Sigmoid colon (tissue), 7 donors: ENCODE measurements at regions of chr13 and their contacts with region 1.

Region 1: GRCh38 chr13:52128714-52129700 is at the start of gene NEK5:
- DNase-seq: peak; percentile 70
- H3K4me3 ChIP-seq: peak within 1 kb of the TSS; percentile 50 to 74 (median 64)
- H3K27ac ChIP-seq: peak within 1 kb of the TSS; percentile 10 to 65 (median 58)
- H3K4me1 ChIP-seq: peaks cover 0 to 22% (median 20%) of the 10 kb centered on the region in 4 donors
- H3K27me3 ChIP-seq: no peaks in the 10 kb centered on the region
- CTCF ChIP-seq: peak in 3 of 4 experiments; percentile 64 to 77 (median 71)
- EP300 ChIP-seq: no peak
- POLR2A ChIP-seq: no peak
- total RNA-seq, gene NEK5: 0.27 to 0.83 (median 0.33) TPM in 3 of 4 donors, not detected in the other

Region 2: DNA sequence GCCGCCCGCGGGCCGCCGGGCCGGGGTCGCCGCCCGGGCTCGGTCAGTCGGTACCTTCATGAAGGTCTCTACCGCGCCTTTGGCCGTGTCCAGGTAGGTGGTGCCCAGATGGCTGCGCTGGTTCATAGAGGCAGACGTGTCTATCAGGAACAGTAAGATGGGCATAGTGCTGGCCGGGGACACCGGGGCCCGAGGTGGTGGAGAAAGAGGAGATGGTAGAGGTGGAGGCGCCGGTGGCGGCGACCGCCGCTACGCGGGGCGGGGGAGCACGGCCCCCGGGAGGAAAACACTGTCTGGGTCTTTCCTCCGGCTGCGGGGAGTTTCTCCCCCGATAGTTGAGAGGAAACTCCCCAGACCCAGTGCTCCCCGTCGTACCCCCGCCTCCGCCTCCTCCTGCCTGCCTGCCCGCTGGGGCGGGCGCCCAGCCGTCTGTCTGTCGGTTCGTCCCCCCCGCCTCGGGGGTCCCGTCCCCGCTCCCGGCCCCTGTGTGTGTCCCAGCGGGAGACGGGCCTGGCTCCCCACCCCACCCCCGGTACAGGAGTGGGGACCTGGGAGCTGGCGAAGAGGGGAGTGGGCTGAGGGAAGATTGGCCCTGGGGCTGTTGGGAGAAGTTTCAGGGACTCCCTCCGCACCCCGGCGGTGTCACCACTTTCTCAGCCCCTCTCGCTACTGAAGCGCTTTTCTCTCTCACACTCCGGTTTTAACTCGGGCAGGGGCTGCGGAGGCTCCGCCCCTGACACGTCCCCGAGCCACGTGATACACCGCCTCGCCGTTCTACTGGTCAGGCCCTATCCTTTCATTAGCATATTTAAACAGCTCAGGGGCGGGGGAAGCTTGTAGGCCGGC is 676.4 kb before region 1 on chr13 and contains the start of gene INTS6:
- intact Hi-C with region 1: loop called (anchors 10 kb)
- DNase-seq: peak; percentile 100
- H3K4me3 ChIP-seq: peak within 1 kb of the TSS; percentile 87 to 97 (median 92)
- H3K27ac ChIP-seq: peak within 1 kb of the TSS; percentile 99 to 100 (median 100)
- H3K4me1 ChIP-seq: peaks cover 0 to 38% (median 28%) of the 10 kb centered on the region in 4 donors
- H3K27me3 ChIP-seq: no peaks in the 10 kb centered on the region
- CTCF ChIP-seq: no peak
- EP300 ChIP-seq: no peak
- POLR2A ChIP-seq: peak; percentile 99 to 100
- total RNA-seq, gene INTS6: 30.0 to 43.3 (median 35.1) TPM

Region 3: DNA sequence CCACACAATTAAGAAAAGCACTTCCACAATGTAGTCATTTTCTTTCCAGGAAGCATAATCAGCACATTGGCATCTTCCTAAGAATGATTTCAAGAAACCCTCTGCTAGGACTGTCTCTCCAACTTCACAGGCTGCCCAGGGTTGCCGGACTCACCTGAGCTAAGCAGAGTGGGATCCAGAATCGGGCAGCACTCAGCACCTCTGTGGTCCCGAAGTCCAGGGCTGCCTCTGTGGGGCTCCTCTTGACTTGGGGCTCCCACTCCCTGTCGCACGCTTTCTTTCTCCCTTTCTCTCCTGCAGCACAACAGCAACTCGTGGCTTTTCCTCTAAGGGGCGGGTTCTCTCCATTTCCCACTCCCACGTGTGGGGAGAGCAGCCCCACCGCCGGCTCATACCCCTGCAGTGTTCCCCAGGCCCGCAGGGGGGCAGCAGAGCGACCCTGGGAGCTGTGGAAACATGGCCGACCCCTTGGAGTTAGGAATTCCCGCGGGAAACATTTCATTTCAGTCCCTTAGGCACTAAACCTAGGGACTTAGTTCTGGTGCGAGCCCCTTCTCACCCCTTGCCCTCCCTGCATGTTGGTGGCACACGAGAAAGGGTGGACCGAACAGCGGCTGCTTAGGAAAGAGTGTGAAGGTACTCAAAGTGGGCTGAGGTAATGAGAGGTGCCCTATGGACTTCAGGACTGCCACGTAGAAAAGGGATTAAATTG is 284.0 kb before region 1 on chr13 and contains the start of gene TMEM272:
- intact Hi-C with region 1: loop called (anchors 2 kb)
- DNase-seq: no peak
- H3K4me3 ChIP-seq: no peak within 1 kb of the TSS
- H3K27ac ChIP-seq: no peak within 1 kb of the TSS
- H3K4me1 ChIP-seq: peaks cover 0 to 8% (median 2%) of the 10 kb centered on the region in 4 donors
- H3K27me3 ChIP-seq: no peaks in the 10 kb centered on the region
- CTCF ChIP-seq: peak; percentile 23 to 86 (median 59)
- EP300 ChIP-seq: no peak
- POLR2A ChIP-seq: no peak
- total RNA-seq, gene TMEM272: under 0.01 TPM in 1 of 4 donors, not detected in the others

Region 4: DNA sequence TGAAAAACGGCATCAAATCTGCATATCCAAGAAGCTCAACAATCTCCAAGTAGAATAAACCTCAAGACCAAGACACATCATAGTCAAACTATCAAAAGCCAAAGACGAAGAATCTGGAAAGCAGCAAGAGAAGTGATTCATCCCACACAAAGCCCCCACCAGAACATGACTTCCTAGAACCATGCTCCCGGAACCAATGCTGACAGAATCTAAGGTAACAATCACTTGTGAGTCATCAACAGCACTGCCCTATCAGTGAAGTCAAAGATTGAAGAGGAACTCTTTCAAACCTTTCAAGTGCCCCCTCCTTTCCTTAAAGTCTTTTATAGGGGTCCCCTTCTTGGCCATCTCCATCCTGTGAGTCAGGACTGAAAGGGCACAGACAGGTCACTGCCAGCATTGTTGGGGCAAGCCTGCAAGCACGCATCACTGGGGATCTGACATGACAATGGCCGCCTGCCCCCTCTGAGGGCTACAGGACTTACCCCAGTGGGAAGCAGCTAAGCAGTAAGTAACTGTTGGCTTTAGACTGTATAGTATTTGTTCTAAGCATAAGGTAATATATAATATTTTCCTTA is 267.2 kb before region 1 on chr13 and contains the start of gene CCDC70:
- intact Hi-C with region 1: no loop called
- DNase-seq: no peak
- H3K4me3 ChIP-seq: no peak within 1 kb of the TSS
- H3K27ac ChIP-seq: no peak within 1 kb of the TSS
- H3K4me1 ChIP-seq: no peaks in the 10 kb centered on the region
- H3K27me3 ChIP-seq: no peaks in the 10 kb centered on the region
- CTCF ChIP-seq: no peak
- EP300 ChIP-seq: no peak
- POLR2A ChIP-seq: no peak
- total RNA-seq, gene CCDC70: not detected

Region 5: GRCh38 chr13:51934461-51935049 is 194.5 kb before region 1 on chr13:
- intact Hi-C with region 1: loop called (anchors 5 kb)
- DNase-seq: no peak
- H3K4me3 ChIP-seq: no peak overlapping the region
- H3K27ac ChIP-seq: no peak overlapping the region
- H3K4me1 ChIP-seq: no peaks in the 10 kb centered on the region
- H3K27me3 ChIP-seq: no peaks in the 10 kb centered on the region
- CTCF ChIP-seq: no peak
- EP300 ChIP-seq: no peak
- POLR2A ChIP-seq: no peak

Region 6: DNA sequence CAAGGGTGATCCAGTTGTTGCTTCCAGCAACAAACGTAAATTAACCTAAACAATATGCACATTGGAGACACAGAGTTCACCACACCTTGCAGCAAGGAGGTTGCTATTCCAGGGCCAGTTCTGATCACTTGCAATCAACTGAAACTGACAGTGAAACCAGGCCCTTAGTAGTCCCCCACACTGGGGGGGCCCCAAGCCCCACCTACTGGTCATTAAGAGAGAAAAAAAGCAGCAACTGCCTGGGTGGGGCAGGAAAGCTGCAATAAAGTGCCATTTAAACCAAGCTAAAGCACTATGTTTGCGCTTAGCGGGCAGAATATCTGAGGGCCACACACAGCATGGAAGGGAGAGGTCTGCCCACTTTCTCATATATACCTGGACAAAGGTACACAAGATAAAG is 169.2 kb before region 1 on chr13:
- intact Hi-C with region 1: no loop called
- DNase-seq: no peak
- H3K4me3 ChIP-seq: no peak overlapping the region
- H3K27ac ChIP-seq: no peak overlapping the region
- H3K4me1 ChIP-seq: no peaks in the 10 kb centered on the region
- H3K27me3 ChIP-seq: no peaks in the 10 kb centered on the region
- CTCF ChIP-seq: no peak
- EP300 ChIP-seq: no peak
- POLR2A ChIP-seq: no peak